ENCODE measurements at regions of chr2 and their contacts with region 1.

Region 1: GRCh38 chr2:160375802-160376469 is 117.7 kb downstream of the RBMS1 start:
- DNase-seq: peak in 6 of 9 donors; percentile 13 to 33 (median 26)
- ATAC-seq: peak; percentile 66
- H3K4me3 ChIP-seq: no peak overlapping the region
- H3K4me3 Mint-ChIP-seq: peak overlapping the region in 9 of 10 donors; percentile 29 to 60 (median 53)
- H3K27ac ChIP-seq: no peak overlapping the region
- H3K27ac Mint-ChIP-seq: peak overlapping the region in 3 of 9 donors; percentile 43 to 54 (median 49)
- H3K4me1 ChIP-seq: peaks cover 31 to 74% of the 10 kb centered on the region in 2 donors
- H3K4me1 Mint-ChIP-seq: peaks cover 67 to 100% (median 96%) of the 10 kb centered on the region in 7 donors
- H3K27me3 ChIP-seq: no peaks in the 10 kb centered on the region
- H3K27me3 Mint-ChIP-seq: no peaks in the 10 kb centered on the region

Region 2: GRCh38 chr2:160338901-160339685 is 36.8 kb before region 1 on chr2:
- CTCF ChIA-PET with region 1: no interaction called
- POLR2A ChIA-PET with region 1: no interaction called
- intact Hi-C with region 1: no loop called
- DNase-seq: no peak
- ATAC-seq: no peak
- H3K4me3 ChIP-seq: no peak overlapping the region
- H3K4me3 Mint-ChIP-seq: peak overlapping the region in 2 of 10 donors; percentile 1 to 51
- H3K27ac ChIP-seq: peak overlapping the region; percentile 19
- H3K27ac Mint-ChIP-seq: peak overlapping the region in 8 of 9 donors; percentile 41 to 87 (median 68)
- H3K4me1 ChIP-seq: peaks cover 13 to 14% of the 10 kb centered on the region in 2 donors
- H3K4me1 Mint-ChIP-seq: peaks cover 46 to 93% (median 87%) of the 10 kb centered on the region in 7 donors
- H3K27me3 ChIP-seq: no peaks in the 10 kb centered on the region
- H3K27me3 Mint-ChIP-seq: no peaks in the 10 kb centered on the region

Region 3: GRCh38 chr2:160360089-160360757 is 15.7 kb before region 1 on chr2:
- CTCF ChIA-PET with region 1: no interaction called
- POLR2A ChIA-PET with region 1: interaction called, 5 read pairs
- intact Hi-C with region 1: loop called in 1 of 2 experiments (anchors 2 kb)
- DNase-seq: no peak
- ATAC-seq: no peak
- H3K4me3 ChIP-seq: no peak overlapping the region
- H3K4me3 Mint-ChIP-seq: peak overlapping the region in 2 of 10 donors; percentile 10 to 56
- H3K27ac ChIP-seq: no peak overlapping the region
- H3K27ac Mint-ChIP-seq: peak overlapping the region in 5 of 9 donors; percentile 9 to 78 (median 20)
- H3K4me1 ChIP-seq: peaks cover 0 to 4% of the 10 kb centered on the region in 2 donors
- H3K4me1 Mint-ChIP-seq: peaks cover 35 to 91% (median 74%) of the 10 kb centered on the region in 7 donors
- H3K27me3 ChIP-seq: no peaks in the 10 kb centered on the region
- H3K27me3 Mint-ChIP-seq: no peaks in the 10 kb centered on the region

Region 4: DNA sequence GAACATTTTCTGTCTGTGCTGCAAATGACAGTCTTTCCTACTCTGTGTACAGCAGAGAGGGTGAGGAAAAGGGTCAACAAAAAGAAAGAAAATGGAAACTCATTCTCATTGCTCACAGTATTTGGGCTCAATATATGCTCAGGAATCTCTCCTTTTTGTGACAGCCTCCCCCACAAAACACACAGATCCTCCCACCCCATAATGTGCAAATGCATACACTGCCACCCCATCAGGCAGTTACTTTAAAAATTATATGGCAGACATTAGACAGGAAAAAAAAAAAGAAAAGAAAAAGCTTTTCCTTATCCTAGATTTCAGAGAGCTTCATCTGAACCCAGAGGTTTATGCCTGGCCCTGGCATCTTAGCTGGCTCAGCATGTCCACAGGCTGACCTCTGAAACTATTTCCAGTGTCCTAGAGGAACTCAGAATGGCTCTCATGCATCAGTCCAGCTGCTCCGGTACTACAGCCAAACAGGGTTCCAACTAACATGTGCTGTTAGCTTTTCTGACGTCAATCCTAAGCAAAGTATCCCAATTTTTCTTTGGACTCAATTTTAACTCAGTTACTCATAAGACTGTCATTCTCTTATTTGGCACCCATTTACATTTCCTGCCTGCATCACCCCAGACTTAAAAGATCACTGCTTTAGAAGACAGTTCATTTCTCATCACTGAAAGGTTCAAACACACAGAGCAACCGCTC is 11.8 kb after region 1 on chr2:
- CTCF ChIA-PET with region 1: interaction called, 4 read pairs
- POLR2A ChIA-PET with region 1: interaction called, 3 read pairs
- intact Hi-C with region 1: loop called in 1 of 2 experiments (anchors 1 kb)
- DNase-seq: no peak
- ATAC-seq: peak; percentile 21
- H3K4me3 ChIP-seq: no peak overlapping the region
- H3K4me3 Mint-ChIP-seq: peak overlapping the region; percentile 60 to 78 (median 74)
- H3K27ac ChIP-seq: no peak overlapping the region
- H3K27ac Mint-ChIP-seq: peak overlapping the region; percentile 53 to 89 (median 81)
- H3K4me1 ChIP-seq: peaks cover 50 to 53% of the 10 kb centered on the region in 2 donors
- H3K4me1 Mint-ChIP-seq: peaks cover 11 to 96% (median 66%) of the 10 kb centered on the region in 7 donors
- H3K27me3 ChIP-seq: no peaks in the 10 kb centered on the region
- H3K27me3 Mint-ChIP-seq: no peaks in the 10 kb centered on the region

Region 5: GRCh38 chr2:160394153-160394552 is 18.2 kb after region 1 on chr2:
- CTCF ChIA-PET with region 1: no interaction called
- POLR2A ChIA-PET with region 1: interaction called, 3 read pairs
- intact Hi-C with region 1: loop called in 1 of 2 experiments (anchors 2 kb)
- DNase-seq: peak in 4 of 9 donors; percentile 27 to 53 (median 48)
- ATAC-seq: peak; percentile 94
- H3K4me3 ChIP-seq: no peak overlapping the region
- H3K4me3 Mint-ChIP-seq: peak overlapping the region; percentile 29 to 76 (median 60)
- H3K27ac ChIP-seq: peak overlapping the region; percentile 26
- H3K27ac Mint-ChIP-seq: peak overlapping the region; percentile 33 to 88 (median 71)
- H3K4me1 ChIP-seq: peaks cover 55 to 73% of the 10 kb centered on the region in 2 donors
- H3K4me1 Mint-ChIP-seq: peaks cover 0 to 68% (median 52%) of the 10 kb centered on the region in 7 donors
- H3K27me3 ChIP-seq: no peaks in the 10 kb centered on the region
- H3K27me3 Mint-ChIP-seq: no peaks in the 10 kb centered on the region